Activated B cell treated with CpG ODN at 0.5 μM for 24 hours (primary cell): ENCODE measurements at regions of chr1 and their contacts with region 1.

Region 1: GRCh38 chr1:235050911-235051360 is 77.7 kb downstream of the TOMM20 start:
- DNase-seq: peak; percentile 30
- ATAC-seq: peak; percentile 51
- H3K4me3 Mint-ChIP-seq: peak overlapping the region; percentile 24
- H3K27ac Mint-ChIP-seq: peak overlapping the region; percentile 60
- H3K4me1 Mint-ChIP-seq: peaks cover 50% of the 10 kb centered on the region
- H3K27me3 Mint-ChIP-seq: no peaks in the 10 kb centered on the region
- CTCF ChIP-seq: no peak

Region 2: DNA sequence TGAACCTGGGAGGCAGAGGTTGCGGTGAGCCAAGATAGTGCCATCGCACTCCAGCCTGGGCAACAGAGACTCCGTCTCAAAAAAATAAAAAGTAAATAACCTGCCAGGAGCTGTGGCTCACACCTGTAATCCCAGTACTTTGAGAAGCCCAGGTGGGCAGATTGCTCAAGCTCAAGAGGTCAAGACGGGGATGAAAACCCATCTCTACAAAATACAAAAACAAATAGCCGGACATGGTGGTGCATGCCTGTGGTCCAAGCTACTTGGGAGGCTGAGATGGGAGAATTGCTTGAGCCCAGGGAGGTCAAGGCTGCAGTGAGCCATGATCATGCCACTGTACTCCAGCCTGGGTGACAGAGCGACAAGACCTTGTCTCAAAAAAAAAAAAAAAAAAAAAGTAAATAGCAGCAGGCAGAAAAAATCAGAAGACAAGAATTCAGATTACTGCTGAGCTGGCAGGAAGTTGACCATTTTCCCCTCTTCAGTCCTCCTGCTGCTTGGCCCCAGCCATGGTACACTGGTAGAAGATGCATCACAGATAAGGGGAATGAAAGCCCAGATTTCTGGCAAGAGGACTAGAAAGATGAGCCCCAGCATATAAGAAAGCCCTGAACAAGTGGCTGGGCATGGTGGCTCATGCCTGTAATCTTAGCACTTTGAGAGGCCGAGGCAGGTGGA is 19.9 kb before region 1 on chr1:
- CTCF ChIA-PET with region 1: interaction called, 3 read pairs
- POLR2A ChIA-PET with region 1: interaction called, 22 read pairs
- intact Hi-C with region 1: loop called (anchors 2 kb)
- DNase-seq: no peak
- ATAC-seq: no peak
- H3K4me3 Mint-ChIP-seq: no peak overlapping the region
- H3K27ac Mint-ChIP-seq: no peak overlapping the region
- H3K4me1 Mint-ChIP-seq: peaks cover 16% of the 10 kb centered on the region
- H3K27me3 Mint-ChIP-seq: no peaks in the 10 kb centered on the region
- CTCF ChIP-seq: no peak